Activated B cell treated with CpG ODN at 0.5 μM for 24 hours (primary cell): ENCODE measurements at regions of chr20 and their contacts with region 1.

Region 1: DNA sequence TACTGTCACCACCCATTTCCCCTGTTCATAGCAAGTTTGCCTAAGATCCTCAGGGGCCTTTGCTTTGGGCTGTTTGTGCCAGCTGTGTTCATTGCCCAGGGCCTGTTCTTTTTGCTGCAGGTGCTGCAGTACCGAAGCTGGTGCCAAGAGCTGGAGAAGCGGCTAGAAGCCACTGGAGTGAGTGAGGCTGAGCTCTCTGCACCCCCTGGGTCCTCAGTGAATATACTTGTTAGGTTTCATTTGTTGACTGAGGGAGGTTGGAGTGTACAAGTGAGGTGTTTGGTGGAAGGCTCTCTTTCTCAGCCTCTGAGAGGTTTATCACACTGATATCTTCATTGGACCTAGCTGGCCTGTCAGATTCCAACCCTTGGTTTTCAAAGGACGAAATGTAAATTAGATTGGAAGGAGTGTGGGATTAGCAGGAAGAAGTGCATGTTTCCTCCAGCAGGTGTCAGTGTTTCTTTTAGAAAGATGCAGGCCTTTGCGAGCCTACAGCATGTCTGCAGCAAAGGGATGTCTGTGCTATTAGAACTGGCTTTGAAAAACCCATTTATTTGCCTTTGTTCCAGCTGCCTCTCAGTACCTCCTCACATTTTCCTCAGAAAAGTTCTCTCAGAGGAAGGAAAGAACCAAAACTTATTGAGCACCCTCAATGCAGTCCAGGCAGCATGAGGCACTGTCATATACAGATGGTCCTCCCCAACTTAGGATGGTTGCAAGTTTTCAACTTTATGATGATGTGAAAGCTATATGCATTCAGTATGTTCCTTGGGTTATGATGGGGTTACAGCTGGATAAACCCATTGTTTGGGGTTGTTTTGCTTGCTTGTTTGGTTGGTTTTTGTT is 8.3 kb downstream of the CEP250 start:
- DNase-seq: no peak
- ATAC-seq: peak; percentile 84
- H3K4me3 Mint-ChIP-seq: no peak overlapping the region
- H3K27ac Mint-ChIP-seq: no peak overlapping the region
- H3K4me1 Mint-ChIP-seq: peaks cover 13% of the 10 kb centered on the region
- H3K27me3 Mint-ChIP-seq: no peaks in the 10 kb centered on the region
- CTCF ChIP-seq: no peak

Region 2: GRCh38 chr20:35312348-35312747 is 151.3 kb before region 1 on chr20:
- CTCF ChIA-PET with region 1: no interaction called
- POLR2A ChIA-PET with region 1: no interaction called
- intact Hi-C with region 1: no loop called
- DNase-seq: no peak
- ATAC-seq: no peak
- H3K4me3 Mint-ChIP-seq: no peak overlapping the region
- H3K27ac Mint-ChIP-seq: peak overlapping the region; percentile 16
- H3K4me1 Mint-ChIP-seq: no peaks in the 10 kb centered on the region
- H3K27me3 Mint-ChIP-seq: no peaks in the 10 kb centered on the region
- CTCF ChIP-seq: no peak

Region 3: DNA sequence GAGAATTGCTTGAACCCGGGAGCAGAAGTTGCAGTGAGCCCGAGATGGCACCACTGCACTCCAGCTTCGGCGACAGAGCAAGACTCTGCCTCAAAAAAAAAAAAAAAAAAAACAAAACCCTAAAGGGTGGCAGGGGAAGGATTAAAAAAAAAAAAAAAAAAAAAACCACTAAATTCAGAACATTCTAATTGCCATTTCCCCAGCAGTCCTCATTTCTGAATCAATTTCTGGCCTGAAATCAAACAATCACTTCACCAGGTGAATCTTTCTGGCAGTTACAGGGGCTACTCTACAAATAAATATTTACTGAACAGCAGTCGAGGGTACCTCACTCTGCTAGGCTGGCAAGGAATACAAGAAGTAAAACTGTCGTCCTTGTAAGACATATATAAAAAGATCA is 53.1 kb before region 1 on chr20:
- CTCF ChIA-PET with region 1: no interaction called
- POLR2A ChIA-PET with region 1: no interaction called
- intact Hi-C with region 1: no loop called
- DNase-seq: no peak
- ATAC-seq: no peak
- H3K4me3 Mint-ChIP-seq: peak overlapping the region; percentile 97
- H3K27ac Mint-ChIP-seq: no peak overlapping the region
- H3K4me1 Mint-ChIP-seq: peaks cover 19% of the 10 kb centered on the region
- H3K27me3 Mint-ChIP-seq: no peaks in the 10 kb centered on the region
- CTCF ChIP-seq: no peak

Region 4: DNA sequence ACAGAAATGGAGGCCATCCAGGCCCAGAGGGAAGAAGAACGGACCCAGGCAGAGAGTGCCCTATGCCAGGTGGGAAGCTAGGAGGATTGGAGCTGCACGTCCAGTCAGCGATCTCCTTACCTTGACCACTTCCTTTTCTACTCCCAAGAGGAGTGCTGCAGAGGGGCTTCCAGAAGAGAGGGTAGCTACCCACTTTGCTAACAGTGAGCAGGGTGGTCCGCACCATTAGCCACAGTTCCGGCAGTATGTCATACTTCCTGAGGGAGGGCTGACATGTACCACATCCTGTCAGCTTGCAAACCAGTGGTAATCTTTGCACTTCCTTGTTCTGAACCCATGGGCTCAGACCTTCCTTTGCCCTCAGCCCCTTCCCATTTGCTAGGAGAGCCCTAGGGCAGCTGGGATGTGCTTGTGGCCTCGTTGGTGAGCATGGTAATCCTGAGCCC is 27.1 kb after region 1 on chr20:
- CTCF ChIA-PET with region 1: interaction called, 7 read pairs
- POLR2A ChIA-PET with region 1: no interaction called
- intact Hi-C with region 1: loop called (anchors 1 kb)
- DNase-seq: peak; percentile 44
- ATAC-seq: peak; percentile 99
- H3K4me3 Mint-ChIP-seq: peak overlapping the region; percentile 98
- H3K27ac Mint-ChIP-seq: peak overlapping the region; percentile 98
- H3K4me1 Mint-ChIP-seq: peaks cover 45% of the 10 kb centered on the region
- H3K27me3 Mint-ChIP-seq: no peaks in the 10 kb centered on the region
- CTCF ChIP-seq: no peak

Region 5: DNA sequence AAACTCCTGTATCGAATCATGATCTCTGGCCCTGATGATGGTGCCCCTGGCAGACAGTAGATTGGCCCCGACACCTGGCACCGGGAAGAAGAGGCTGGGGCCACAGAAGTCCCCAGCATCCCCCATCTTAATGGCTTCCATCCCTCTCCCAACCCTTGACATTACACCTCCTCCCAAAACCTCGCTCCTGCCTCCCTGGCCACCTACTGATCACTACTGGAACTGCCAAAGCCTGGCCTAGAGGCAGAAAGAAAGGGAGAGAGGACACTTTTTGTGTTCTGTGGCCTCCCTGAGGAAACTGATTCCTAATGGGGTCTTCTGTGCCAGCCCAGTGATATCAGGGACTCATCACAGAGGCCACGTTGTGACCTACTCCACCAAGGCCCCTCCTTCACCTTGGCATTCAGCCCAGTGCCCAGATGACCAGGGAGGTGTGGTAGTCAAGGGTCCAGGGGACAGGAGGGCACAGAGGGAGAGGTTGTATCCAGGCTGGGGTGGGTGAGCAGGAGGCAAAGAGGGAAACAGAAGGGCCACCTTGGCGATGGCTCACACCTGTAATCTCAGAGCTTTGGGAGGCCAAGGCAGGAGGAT is 59.7 kb after region 1 on chr20:
- CTCF ChIA-PET with region 1: interaction called, 3 read pairs
- POLR2A ChIA-PET with region 1: no interaction called
- intact Hi-C with region 1: loop called (anchors 1 kb)
- DNase-seq: no peak
- ATAC-seq: peak; percentile 61
- H3K4me3 Mint-ChIP-seq: no peak overlapping the region
- H3K27ac Mint-ChIP-seq: no peak overlapping the region
- H3K4me1 Mint-ChIP-seq: no peaks in the 10 kb centered on the region
- H3K27me3 Mint-ChIP-seq: no peaks in the 10 kb centered on the region
- CTCF ChIP-seq: no peak

Region 6: GRCh38 chr20:35699127-35699975 is 235.7 kb after region 1 on chr20 and contains the starts of genes NFS1 and ROMO1:
- CTCF ChIA-PET with region 1: interaction called, 6 read pairs
- POLR2A ChIA-PET with region 1: no interaction called
- intact Hi-C with region 1: loop called (anchors 1 kb)
- DNase-seq: peak; percentile 85
- ATAC-seq: peak; percentile 90
- H3K4me3 Mint-ChIP-seq: peak within 1 kb of the TSS; percentile 97
- H3K27ac Mint-ChIP-seq: peak within 1 kb of the TSS; percentile 91
- H3K4me1 Mint-ChIP-seq: peaks cover 27% of the 10 kb centered on the region
- H3K27me3 Mint-ChIP-seq: no peaks in the 10 kb centered on the region
- CTCF ChIP-seq: no peak
- total RNA-seq, gene NFS1: 27.1 and 30.6 TPM in 2 replicates
- total RNA-seq, gene ROMO1: 96.8 and 131 TPM in 2 replicates